Tibial artery (tissue), 4 donors: ENCODE measurements at regions of chr3 and their contacts with region 1.

Region 1: GRCh38 chr3:106635271-106635670 is 742.0 kb upstream of the CCDC54 start:
- DNase-seq: no peak
- H3K4me3 ChIP-seq: no peak overlapping the region
- H3K27ac ChIP-seq: no peak overlapping the region
- H3K4me1 ChIP-seq: no peaks in the 10 kb centered on the region
- H3K27me3 ChIP-seq: no peaks in the 10 kb centered on the region
- CTCF ChIP-seq: no peak

Region 2: GRCh38 chr3:106534206-106534605 is 101.1 kb before region 1 on chr3:
- intact Hi-C with region 1: no loop called
- DNase-seq: no peak
- H3K4me3 ChIP-seq: no peak overlapping the region
- H3K27ac ChIP-seq: no peak overlapping the region
- H3K4me1 ChIP-seq: no peaks in the 10 kb centered on the region
- H3K27me3 ChIP-seq: no peaks in the 10 kb centered on the region
- CTCF ChIP-seq: no peak

Region 3: GRCh38 chr3:106913111-106913698 is 277.9 kb after region 1 on chr3:
- intact Hi-C with region 1: loop called (anchors 5 kb)
- DNase-seq: no peak
- H3K4me3 ChIP-seq: no peak overlapping the region
- H3K27ac ChIP-seq: no peak overlapping the region
- H3K4me1 ChIP-seq: no peaks in the 10 kb centered on the region
- H3K27me3 ChIP-seq: no peaks in the 10 kb centered on the region
- CTCF ChIP-seq: no peak